ENCODE measurements at regions of chr9 and their contacts with region 1.

Region 1: GRCh38 chr9:90838100-90838499 is 36.5 kb downstream of the SYK start:
- DNase-seq: peak in 1 of 3 donors; percentile 19
- H3K4me3 ChIP-seq: no peak overlapping the region
- H3K4me3 Mint-ChIP-seq: no peak overlapping the region
- H3K27ac ChIP-seq: peak overlapping the region in 1 of 2 donors; percentile 73
- H3K27ac Mint-ChIP-seq: peak overlapping the region in 5 of 7 donors; percentile 2 to 82 (median 67)
- H3K4me1 ChIP-seq: peaks cover 48 to 80% of the 10 kb centered on the region in 2 donors
- H3K4me1 Mint-ChIP-seq: peaks cover 56% of the 10 kb centered on the region
- H3K27me3 ChIP-seq: no peaks in the 10 kb centered on the region
- H3K27me3 Mint-ChIP-seq: no peaks in the 10 kb centered on the region
- CTCF ChIP-seq: peak; percentile 15

Region 2: GRCh38 chr9:90801583-90802289 is 36.4 kb before region 1 on chr9 and contains the start of gene SYK:
- intact Hi-C with region 1: loop called in 1 of 2 experiments (anchors 5 kb)
- DNase-seq: peak; percentile 87 to 91 (median 89)
- H3K4me3 ChIP-seq: peak within 1 kb of the TSS; percentile 78 to 98 (median 97)
- H3K4me3 Mint-ChIP-seq: peak within 1 kb of the TSS; percentile 93
- H3K27ac ChIP-seq: peak within 1 kb of the TSS; percentile 98 to 99
- H3K27ac Mint-ChIP-seq: peak within 1 kb of the TSS; percentile 96 to 99 (median 97)
- H3K4me1 ChIP-seq: peaks cover 74 to 88% of the 10 kb centered on the region in 2 donors
- H3K4me1 Mint-ChIP-seq: peaks cover 73% of the 10 kb centered on the region
- H3K27me3 ChIP-seq: no peaks in the 10 kb centered on the region
- H3K27me3 Mint-ChIP-seq: peaks cover 0 to 3% (median 3%) of the 10 kb centered on the region in 3 donors
- CTCF ChIP-seq: no peak
- polyA plus RNA-seq, gene SYK: 51.1 to 186 (median 177) TPM